CD4-positive, alpha-beta T cell (primary cell): ENCODE measurements at regions of chr17 and their contacts with region 1.

Region 1: GRCh38 chr17:38729886-38730525 is at the start of gene CISD3:
- DNase-seq: peak; percentile 67 to 96 (median 84)
- ATAC-seq: peak; percentile 70
- H3K4me3 ChIP-seq: peak within 1 kb of the TSS; percentile 71
- H3K4me3 Mint-ChIP-seq: peak within 1 kb of the TSS; percentile 99
- H3K27ac ChIP-seq: peak within 1 kb of the TSS; percentile 60 to 80
- H3K27ac Mint-ChIP-seq: peak within 1 kb of the TSS; percentile 89
- H3K4me1 ChIP-seq: peaks cover 89% of the 10 kb centered on the region
- H3K4me1 Mint-ChIP-seq: peaks cover 85% of the 10 kb centered on the region
- H3K27me3 ChIP-seq: no peaks in the 10 kb centered on the region
- H3K27me3 Mint-ChIP-seq: no peaks in the 10 kb centered on the region
- CTCF ChIP-seq: peak; percentile 54
- total RNA-seq, gene CISD3: 4.7 to 5.7 TPM

Region 2: DNA sequence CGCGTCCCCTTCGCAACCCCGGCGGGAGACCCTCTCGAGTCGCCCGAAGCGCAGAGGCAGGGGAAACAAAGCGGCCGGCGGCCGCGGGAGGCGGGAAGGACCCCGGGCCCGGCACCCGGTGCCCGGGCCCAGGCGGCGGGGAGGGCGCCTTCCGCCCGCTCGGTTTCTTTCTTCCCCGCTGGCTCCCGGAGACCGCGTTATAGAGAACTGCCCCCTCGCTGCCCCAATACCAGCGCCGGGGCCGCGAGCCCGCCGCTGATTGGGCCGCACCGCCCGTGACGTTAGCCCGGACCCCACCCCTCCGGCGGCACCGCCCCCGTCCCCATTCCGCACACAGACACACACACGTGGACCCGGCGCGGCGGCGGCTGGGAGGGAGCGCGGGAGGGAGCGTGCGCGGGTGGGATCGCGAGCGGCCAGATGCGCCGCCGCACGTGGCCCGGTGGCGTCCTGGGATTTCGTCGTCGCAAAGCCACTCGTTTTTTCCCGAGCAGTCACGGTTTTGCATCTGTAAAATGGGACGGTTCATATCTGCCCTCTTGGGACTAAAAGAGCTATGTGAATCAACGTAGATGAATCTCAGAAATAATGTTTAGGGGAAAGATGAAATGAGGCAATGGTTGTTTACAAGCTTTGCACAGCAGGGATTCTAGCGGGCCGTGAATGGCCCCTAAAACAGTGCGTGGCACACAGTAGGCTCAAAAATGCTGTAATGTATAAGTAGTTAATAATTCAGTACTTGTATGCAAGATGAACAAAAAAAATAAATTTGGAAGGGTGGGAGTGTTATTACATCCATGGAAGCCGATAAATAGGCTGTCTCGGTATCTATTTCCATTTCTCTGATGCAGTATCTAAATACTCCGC is 55.0 kb before region 1 on chr17 and contains the start of gene EPOP:
- CTCF ChIA-PET with region 1: interaction called, 70 read pairs
- POLR2A ChIA-PET with region 1: interaction called, 19 read pairs
- intact Hi-C with region 1: loop called (anchors 1 kb)
- DNase-seq: peak; percentile 47 to 92 (median 80)
- ATAC-seq: peak; percentile 80
- H3K4me3 ChIP-seq: peak within 1 kb of the TSS; percentile 38
- H3K4me3 Mint-ChIP-seq: peak within 1 kb of the TSS; percentile 75
- H3K27ac ChIP-seq: no peak within 1 kb of the TSS
- H3K27ac Mint-ChIP-seq: no peak within 1 kb of the TSS
- H3K4me1 ChIP-seq: peaks cover 37% of the 10 kb centered on the region
- H3K4me1 Mint-ChIP-seq: peaks cover 24% of the 10 kb centered on the region
- H3K27me3 ChIP-seq: peaks cover 26 to 34% of the 10 kb centered on the region in 2 experiments
- H3K27me3 Mint-ChIP-seq: peaks cover 54% of the 10 kb centered on the region
- CTCF ChIP-seq: no peak
- total RNA-seq, gene EPOP: 0.16 to 0.34 TPM

Region 3: DNA sequence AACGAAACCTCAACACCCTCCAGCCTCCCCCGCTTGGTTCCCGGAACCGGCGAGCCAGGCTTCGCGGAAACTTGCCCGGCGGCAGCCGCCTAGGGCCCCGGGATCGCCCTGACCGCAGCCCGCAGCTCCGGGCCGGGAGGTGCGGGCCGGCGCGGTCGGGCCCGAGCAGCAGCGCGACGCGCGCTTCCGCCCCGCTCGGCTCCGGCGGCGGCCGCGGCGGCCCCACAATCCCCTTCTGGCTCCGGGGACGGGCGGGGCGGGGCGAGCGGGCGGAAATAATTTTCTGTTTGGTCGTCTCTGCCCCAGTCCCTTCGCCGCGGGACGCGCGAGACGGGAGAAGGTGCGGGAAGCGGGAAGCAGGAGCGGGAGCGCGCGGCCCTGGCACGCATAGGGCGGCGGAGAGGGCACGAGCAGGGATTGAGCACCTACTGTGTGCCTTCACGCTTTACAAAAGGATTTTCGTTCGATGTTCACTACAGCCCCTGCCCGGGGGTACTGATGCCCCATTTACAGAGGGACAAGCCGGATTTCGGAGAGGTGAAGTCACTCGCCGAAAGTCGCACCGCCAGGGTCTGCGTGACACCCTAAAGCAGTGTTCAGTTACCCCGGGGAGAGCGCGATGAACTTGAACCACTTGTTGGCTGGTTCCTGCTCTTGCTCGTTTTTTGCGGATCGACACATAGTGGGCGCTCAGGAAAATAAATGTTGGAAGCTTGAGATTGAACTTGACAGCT is 27.7 kb before region 1 on chr17:
- CTCF ChIA-PET with region 1: interaction called, 11 read pairs
- POLR2A ChIA-PET with region 1: interaction called, 180 read pairs
- intact Hi-C with region 1: loop called (anchors 1 kb)
- DNase-seq: peak; percentile 62 to 92 (median 76)
- ATAC-seq: peak; percentile 33
- H3K4me3 ChIP-seq: peak overlapping the region; percentile 73
- H3K4me3 Mint-ChIP-seq: peak overlapping the region; percentile 95
- H3K27ac ChIP-seq: peak overlapping the region; percentile 94 to 97
- H3K27ac Mint-ChIP-seq: peak overlapping the region; percentile 88
- H3K4me1 ChIP-seq: peaks cover 61% of the 10 kb centered on the region
- H3K4me1 Mint-ChIP-seq: peaks cover 50% of the 10 kb centered on the region
- H3K27me3 ChIP-seq: no peaks in the 10 kb centered on the region
- H3K27me3 Mint-ChIP-seq: no peaks in the 10 kb centered on the region
- CTCF ChIP-seq: no peak

Region 4: DNA sequence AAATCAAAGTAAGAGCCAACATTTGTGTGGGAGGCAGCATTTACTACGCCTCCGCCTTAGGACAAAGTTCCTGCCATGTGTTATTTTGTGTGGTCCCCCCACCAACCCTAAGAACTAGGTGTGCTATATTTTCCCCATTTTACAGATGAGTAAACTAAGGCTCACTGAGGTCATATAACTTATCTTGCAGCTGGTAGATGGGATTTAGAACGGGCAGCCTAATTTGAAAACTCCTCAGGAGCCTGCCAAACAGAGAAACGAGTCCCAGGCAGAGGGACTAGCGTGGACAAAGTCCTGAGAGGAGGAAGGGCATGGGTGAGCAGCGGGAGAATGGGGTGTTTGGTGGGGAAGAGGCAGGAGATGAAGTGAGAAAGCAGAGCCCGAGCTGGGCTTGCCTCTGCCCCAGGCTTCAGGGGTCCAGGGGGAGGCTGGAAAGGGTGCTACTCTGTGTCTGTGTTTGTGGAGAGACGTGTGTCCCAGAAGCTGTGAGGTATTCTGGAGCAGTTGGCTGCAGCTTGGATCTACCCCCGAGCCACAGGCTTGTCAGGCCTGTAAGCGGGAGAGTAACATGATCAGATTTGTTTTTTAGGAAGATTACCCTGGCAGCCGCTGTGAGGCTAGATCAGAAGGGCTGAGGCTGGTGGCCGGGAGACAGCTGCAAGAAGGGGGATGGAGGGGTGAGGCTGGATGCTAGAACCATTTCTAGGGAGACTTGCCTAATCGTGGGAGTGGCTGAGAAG is 20.0 kb before region 1 on chr17:
- CTCF ChIA-PET with region 1: interaction called, 6 read pairs
- POLR2A ChIA-PET with region 1: interaction called, 180 read pairs
- intact Hi-C with region 1: loop called in 1 of 2 experiments (anchors 1 kb)
- DNase-seq: no peak
- ATAC-seq: no peak
- H3K4me3 ChIP-seq: no peak overlapping the region
- H3K4me3 Mint-ChIP-seq: peak overlapping the region; percentile 35
- H3K27ac ChIP-seq: no peak overlapping the region
- H3K27ac Mint-ChIP-seq: peak overlapping the region; percentile 58
- H3K4me1 ChIP-seq: peaks cover 70% of the 10 kb centered on the region
- H3K4me1 Mint-ChIP-seq: peaks cover 52% of the 10 kb centered on the region
- H3K27me3 ChIP-seq: no peaks in the 10 kb centered on the region
- H3K27me3 Mint-ChIP-seq: no peaks in the 10 kb centered on the region
- CTCF ChIP-seq: no peak

Region 5: DNA sequence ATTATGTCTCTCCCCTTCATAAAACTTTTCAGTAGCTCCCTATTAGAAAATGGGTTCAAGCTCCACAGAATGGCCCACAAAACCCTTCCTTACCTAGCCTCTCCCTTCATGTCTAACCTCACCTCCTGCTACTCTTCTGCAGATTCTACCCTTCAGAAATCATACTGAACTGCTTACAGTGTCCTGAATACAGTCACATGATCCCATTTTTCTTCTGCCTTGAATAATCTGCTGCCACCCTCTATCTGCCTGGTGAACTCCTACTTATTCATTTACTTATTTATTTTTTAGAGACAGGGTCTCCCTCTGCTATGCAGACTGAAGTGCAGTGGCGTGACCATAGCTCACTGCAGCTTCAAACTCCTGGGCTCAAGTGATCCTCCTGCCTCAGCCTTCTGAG is 210.4 kb after region 1 on chr17:
- CTCF ChIA-PET with region 1: no interaction called
- POLR2A ChIA-PET with region 1: no interaction called
- intact Hi-C with region 1: no loop called
- DNase-seq: no peak
- ATAC-seq: no peak
- H3K4me3 ChIP-seq: no peak overlapping the region
- H3K4me3 Mint-ChIP-seq: no peak overlapping the region
- H3K27ac ChIP-seq: no peak overlapping the region
- H3K27ac Mint-ChIP-seq: no peak overlapping the region
- H3K4me1 ChIP-seq: no peaks in the 10 kb centered on the region
- H3K4me1 Mint-ChIP-seq: no peaks in the 10 kb centered on the region
- H3K27me3 ChIP-seq: no peaks in the 10 kb centered on the region
- H3K27me3 Mint-ChIP-seq: no peaks in the 10 kb centered on the region
- CTCF ChIP-seq: no peak